ENCODE measurements at regions of chr14 and their contacts with region 1.

Region 1: DNA sequence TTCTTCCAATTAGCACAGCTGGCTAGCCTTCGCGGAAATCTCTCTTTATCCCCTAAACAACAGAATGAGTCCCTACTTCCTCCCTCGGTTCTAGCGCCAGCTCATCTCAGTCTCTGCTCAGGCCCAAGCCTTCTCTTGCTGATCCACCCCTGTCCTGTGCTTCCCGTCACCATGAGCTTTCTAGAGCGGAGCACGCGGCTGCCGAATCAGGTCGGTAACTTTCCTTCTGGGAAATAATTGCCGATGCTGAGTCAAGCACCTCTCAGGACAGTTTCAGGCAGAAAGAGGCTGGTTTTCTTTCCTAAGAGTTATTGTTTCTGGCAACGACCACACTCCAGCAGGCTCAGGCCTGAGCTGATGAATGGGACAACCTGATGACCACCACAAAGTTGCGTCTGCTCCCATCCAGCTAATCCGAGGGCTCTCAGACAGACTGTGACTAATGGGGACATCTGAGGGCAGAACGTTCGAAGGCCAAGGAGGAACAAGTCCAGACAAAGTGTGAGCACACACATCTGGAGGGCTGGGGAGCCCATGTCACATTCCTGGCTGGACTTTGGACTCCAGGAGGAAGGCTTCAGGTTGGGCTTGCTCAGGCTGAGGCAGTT is 13.6 kb upstream of the GPR68 start:
- DNase-seq: no peak
- ATAC-seq: no peak
- H3K4me3 Mint-ChIP-seq: no peak overlapping the region
- H3K27ac Mint-ChIP-seq: peak overlapping the region; percentile 71
- H3K4me1 Mint-ChIP-seq: peaks cover 83% of the 10 kb centered on the region
- H3K27me3 Mint-ChIP-seq: no peaks in the 10 kb centered on the region

Region 2: DNA sequence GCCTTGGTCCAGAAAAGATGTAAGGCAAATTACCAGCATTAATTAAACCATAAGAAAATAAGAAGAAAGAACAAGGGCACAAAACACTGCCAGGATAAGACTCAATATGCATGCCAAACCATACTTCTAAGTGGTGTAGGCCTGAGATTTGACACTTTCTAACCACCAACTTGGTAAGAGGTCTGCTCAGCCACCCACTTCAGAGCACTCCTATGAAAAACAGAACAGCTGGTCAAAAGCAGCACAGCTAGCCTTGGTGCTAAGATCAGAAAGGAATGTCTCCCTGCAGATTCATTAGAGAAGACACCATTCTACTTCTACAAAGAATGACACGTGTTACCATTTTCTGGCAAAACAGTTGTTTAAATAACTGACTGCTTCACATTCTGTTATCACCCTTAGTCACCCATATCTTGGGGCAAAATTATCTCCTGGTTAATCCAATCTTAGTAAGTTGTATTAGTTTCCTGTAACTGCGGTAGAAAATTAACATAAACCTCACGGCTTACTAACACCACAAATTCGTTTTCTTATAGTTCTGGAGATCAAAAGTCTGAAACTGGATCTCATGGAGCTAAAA is 210.9 kb before region 1 on chr14:
- CTCF ChIA-PET with region 1: no interaction called
- POLR2A ChIA-PET with region 1: no interaction called
- DNase-seq: peak; percentile 42
- ATAC-seq: peak; percentile 78
- H3K4me3 Mint-ChIP-seq: no peak overlapping the region
- H3K27ac Mint-ChIP-seq: peak overlapping the region; percentile 45
- H3K4me1 Mint-ChIP-seq: peaks cover 60% of the 10 kb centered on the region
- H3K27me3 Mint-ChIP-seq: no peaks in the 10 kb centered on the region

Region 3: DNA sequence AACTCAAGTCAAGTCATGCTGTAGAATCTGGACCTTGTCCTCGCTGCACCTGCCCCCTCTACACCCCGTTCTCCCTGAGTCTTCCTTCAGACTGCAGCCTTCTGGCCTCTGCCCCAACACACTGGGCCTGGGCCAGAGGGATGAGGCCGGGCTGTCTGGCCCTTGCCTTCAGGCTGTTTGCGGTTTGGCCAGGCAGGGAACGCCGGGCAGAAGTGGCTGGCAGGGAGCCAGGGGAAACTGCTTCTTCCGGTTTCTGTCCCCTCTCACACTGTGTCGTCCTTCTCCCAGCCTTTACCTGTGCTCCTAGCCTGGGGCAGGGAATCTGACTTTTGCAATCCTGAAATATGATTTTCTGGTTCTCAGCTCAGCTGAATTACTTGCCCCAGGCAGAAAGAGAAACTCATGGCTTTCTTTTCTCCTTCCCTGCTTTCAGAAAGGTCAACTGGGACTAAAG is 130.7 kb before region 1 on chr14:
- CTCF ChIA-PET with region 1: no interaction called
- POLR2A ChIA-PET with region 1: no interaction called
- DNase-seq: no peak
- ATAC-seq: no peak
- H3K4me3 Mint-ChIP-seq: no peak overlapping the region
- H3K27ac Mint-ChIP-seq: no peak overlapping the region
- H3K4me1 Mint-ChIP-seq: peaks cover 36% of the 10 kb centered on the region
- H3K27me3 Mint-ChIP-seq: no peaks in the 10 kb centered on the region

Region 4: DNA sequence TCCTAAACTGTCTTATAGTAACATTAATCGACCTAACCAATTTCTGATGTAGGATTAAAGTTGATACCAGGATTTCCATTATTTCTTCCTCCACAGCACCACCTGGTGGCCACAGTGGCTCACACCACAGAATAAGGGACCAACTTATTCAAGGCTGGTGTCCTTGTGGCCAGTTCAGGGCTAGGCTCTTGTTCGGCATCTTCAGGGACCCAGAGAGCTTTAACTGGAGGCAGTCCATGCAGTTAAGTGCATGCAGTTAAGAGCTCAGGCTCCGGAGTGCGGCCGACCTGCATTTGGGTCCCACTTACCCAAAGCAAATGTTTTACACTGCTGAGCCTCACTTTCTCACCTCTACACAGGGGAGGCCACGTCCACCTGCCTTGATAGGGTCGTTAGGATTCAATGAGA is 28.4 kb after region 1 on chr14:
- CTCF ChIA-PET with region 1: interaction called, 12 read pairs
- POLR2A ChIA-PET with region 1: interaction called, 6 read pairs
- DNase-seq: peak; percentile 88
- ATAC-seq: peak; percentile 85
- H3K4me3 Mint-ChIP-seq: no peak overlapping the region
- H3K27ac Mint-ChIP-seq: peak overlapping the region; percentile 54
- H3K4me1 Mint-ChIP-seq: peaks cover 45% of the 10 kb centered on the region
- H3K27me3 Mint-ChIP-seq: no peaks in the 10 kb centered on the region

Measured in activated CD8-positive, alpha-beta T cell treated with anti-CD3 and anti-CD28 coated beads, Interleukin-2, amount 10 ng/mL, durations not matched to agents 7 days and 5 days (primary cell).